WTC11 (cell line): ENCODE measurements at regions of chr2 and their contacts with region 1.

Region 1: DNA sequence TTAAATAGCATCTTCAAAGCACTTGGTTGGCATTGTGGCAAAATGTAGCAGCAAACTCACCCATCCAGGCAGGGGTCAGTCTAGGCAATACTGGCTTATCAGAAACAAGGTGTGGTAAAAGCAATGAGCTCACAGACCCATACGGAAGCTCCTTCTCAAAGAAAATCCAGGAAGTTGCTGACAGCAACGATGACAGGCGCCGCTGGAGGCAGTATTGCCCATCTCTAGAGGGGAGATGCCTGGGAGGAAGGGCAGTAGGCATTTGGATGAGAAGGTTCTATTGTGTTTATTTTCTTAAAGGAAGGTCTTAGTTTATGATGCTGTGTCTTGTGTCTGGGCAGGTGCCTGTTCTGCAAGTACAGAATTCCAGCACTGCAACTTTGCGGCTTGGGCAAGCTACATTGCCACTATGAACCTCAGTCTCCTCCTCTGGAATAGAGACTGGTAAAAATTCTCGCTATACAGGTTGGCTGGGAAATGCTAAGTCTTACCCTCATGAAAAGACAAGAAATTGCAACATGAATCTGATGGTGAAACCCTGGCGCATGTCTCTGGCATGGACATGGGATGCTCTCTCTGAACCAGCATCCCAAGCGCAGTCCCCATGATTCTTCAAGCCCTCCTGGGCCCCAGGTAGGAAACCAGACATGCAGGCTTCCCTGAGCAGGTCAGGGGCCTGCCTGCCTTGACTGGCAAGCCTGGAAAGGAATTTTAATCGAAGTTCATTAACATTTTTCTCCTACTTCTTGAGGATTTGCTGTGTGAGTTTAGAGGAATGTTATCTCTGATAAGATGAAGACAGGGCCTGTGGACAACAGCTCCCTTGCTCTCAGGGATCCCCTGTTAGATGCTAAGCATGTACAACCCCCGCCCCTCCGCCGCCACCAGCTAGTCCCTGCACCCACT is 156.0 kb downstream of the TFCP2L1 start:
- DNase-seq: peak; percentile 74
- ATAC-seq: peak; percentile 64
- H3K4me3 Mint-ChIP-seq: no peak overlapping the region
- H3K27ac Mint-ChIP-seq: no peak overlapping the region
- H3K4me1 Mint-ChIP-seq: peaks cover 23% of the 10 kb centered on the region
- H3K27me3 Mint-ChIP-seq: peaks cover 8% of the 10 kb centered on the region
- CTCF ChIP-seq: peak; percentile 35; the same call in 1 of the 2 replicates

Region 2: DNA sequence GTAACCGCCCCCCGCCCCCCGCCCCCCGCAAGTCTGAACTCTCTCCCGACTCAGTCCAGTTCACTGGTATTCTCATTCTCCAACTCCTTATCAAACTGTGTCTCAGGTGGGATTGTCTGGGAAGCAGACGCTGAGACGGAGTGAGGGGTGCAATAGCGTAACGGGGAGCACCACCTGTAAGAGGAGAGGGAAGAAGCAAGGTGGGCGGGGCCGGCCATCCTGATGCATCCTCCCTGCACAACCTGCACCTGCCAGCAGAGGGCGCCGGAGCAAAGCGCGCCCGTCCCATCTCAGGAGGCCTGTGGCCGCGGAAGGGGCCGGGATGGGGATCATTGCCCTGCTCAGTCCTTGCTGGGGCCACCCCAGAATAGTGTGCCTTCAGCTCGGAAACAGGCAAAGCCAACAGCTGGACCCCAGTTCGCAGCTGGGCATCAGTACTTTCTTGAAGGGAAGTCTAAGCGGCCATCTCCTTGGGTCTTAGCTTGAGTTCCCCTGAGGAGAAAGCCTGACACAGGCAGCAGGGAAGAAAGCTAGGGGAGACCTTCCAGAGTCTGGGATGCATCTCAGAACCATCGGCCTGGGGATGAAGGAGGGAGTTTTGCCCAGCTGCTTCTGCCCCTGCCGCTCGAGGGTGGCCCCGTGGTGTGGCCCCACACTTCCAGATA is 52.0 kb before region 1 on chr2:
- CTCF ChIA-PET with region 1: interaction called, 19 read pairs
- POLR2A ChIA-PET with region 1: no interaction called
- DNase-seq: peak; percentile 93
- ATAC-seq: peak; percentile 33
- H3K4me3 Mint-ChIP-seq: peak overlapping the region; percentile 72
- H3K27ac Mint-ChIP-seq: no peak overlapping the region
- H3K4me1 Mint-ChIP-seq: peaks cover 16% of the 10 kb centered on the region
- H3K27me3 Mint-ChIP-seq: peaks cover 48% of the 10 kb centered on the region
- CTCF ChIP-seq: peak; percentile 96

Region 3: GRCh38 chr2:121104721-121105141 is 24.3 kb before region 1 on chr2:
- CTCF ChIA-PET with region 1: interaction called, 112 read pairs
- POLR2A ChIA-PET with region 1: no interaction called
- DNase-seq: peak; percentile 22
- ATAC-seq: no peak; the same call in 1 of the 2 replicates
- H3K4me3 Mint-ChIP-seq: no peak overlapping the region
- H3K27ac Mint-ChIP-seq: no peak overlapping the region
- H3K4me1 Mint-ChIP-seq: peaks cover 6% of the 10 kb centered on the region; the same call in 1 of the 2 replicates
- H3K27me3 Mint-ChIP-seq: peaks cover 11% of the 10 kb centered on the region
- CTCF ChIP-seq: no peak

Region 4: GRCh38 chr2:121159291-121160071 is 30.5 kb after region 1 on chr2:
- CTCF ChIA-PET with region 1: interaction called, 11 read pairs
- POLR2A ChIA-PET with region 1: no interaction called
- DNase-seq: no peak
- ATAC-seq: no peak
- H3K4me3 Mint-ChIP-seq: no peak overlapping the region
- H3K27ac Mint-ChIP-seq: no peak overlapping the region
- H3K4me1 Mint-ChIP-seq: no peaks in the 10 kb centered on the region
- H3K27me3 Mint-ChIP-seq: peaks cover 21% of the 10 kb centered on the region
- CTCF ChIP-seq: no peak

Region 5: DNA sequence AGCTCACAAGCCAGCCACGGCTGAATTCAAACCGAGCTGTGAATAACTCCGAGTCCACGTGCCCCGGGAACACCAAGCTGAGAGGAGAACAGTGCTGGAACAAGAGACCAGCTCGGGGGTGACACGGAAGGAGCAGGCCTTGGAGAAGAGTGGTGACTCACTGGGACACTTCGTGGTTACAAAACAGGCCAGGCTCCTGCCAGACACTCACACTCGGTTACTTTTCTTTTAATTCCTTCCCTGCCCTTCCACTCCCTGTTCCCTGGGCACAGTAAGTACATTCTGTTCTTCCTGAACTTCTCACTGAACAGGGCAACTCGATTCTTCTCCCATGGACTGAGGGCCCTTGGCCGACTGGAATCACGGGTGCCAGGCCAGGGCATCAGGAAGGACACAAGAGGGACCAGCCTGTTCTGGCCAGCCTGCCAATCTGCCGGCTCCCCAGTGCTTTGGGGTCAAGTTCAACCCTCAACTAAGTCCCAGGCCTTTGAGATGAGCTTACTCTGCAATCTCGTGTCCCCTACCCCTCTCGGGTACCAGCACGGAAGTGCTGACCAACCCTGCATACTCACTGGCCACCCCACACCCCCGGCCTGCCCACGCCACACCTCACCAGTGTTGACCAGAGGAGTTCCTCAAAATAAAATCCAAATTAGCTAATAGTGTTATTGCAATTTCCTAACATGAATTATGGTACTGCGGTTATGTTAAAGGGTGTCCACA is 68.5 kb after region 1 on chr2:
- CTCF ChIA-PET with region 1: interaction called, 18 read pairs
- POLR2A ChIA-PET with region 1: no interaction called
- DNase-seq: no peak
- ATAC-seq: no peak
- H3K4me3 Mint-ChIP-seq: no peak overlapping the region
- H3K27ac Mint-ChIP-seq: 0 out of 2 replicates have a peak overlapping the region, but pooled peaks have one; percentile 20
- H3K4me1 Mint-ChIP-seq: peaks cover 12% of the 10 kb centered on the region
- H3K27me3 Mint-ChIP-seq: no peaks in the 10 kb centered on the region
- CTCF ChIP-seq: no peak

Region 6: DNA sequence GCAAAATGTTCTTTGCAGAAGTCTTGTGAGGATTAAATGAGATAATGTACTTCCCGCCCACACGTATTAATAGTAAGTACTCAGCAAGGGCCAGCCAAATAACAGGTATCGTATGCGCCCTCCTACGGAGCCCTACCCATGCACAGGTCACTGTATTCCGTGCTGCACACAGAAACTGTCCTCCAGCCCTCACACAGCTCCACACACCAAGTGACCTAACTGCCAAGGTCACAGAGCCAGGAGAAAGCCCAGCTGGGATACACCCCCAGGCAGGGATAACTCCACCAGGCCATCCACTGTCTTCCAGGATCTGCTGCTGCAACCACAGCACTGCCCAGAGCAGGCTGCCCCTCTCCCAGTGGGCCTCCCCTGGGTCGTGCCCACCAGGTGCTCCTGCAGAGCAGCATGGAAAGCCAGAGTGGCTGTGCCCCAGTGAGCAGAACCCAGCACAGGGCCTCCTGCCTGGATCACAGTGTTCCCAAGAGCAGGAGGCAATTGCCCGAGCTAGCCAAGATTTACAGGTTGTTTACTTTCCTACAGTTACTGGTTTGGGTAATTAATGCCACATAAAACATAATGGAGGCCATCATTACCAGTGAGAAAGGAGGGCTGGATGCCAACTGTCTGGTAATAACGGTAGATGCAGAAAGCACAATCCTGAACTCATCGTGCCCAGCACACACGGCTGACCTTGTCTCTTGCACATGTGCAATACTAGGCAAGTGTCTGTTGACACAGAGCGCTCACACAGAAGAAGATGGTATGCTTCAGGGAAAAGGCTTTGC is 131.6 kb after region 1 on chr2:
- CTCF ChIA-PET with region 1: no interaction called
- POLR2A ChIA-PET with region 1: no interaction called
- DNase-seq: no peak
- ATAC-seq: no peak
- H3K4me3 Mint-ChIP-seq: no peak overlapping the region
- H3K27ac Mint-ChIP-seq: no peak overlapping the region
- H3K4me1 Mint-ChIP-seq: peaks cover 6% of the 10 kb centered on the region
- H3K27me3 Mint-ChIP-seq: no peaks in the 10 kb centered on the region
- CTCF ChIP-seq: no peak

Region 7: DNA sequence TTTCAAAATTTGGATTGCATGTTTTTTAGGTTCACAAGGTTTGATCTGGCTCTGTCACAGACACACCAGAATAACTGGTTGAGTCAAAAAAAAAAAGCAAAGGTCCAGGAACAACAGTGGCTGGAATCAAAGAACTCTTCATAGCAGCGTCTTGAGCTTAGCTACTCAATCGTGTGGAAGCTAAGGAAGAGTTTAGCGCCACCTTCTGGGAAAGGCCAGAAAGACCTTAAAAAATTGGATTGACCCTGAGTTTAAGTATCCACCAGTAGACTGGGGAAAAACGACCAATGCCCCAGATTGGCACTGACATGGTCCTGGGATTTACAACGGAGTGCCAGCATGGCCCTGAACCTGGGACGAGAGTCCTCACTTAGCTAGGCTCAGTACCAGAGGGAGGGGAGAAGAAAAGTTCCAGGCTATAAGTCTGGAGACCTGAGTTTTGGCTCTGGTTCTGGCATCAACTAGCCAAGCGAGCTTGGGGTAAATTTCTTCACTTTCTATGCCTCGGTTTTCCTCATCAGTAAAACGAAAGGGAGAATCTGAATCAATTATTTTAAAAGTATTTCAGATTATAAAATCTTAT is 227.1 kb after region 1 on chr2:
- CTCF ChIA-PET with region 1: interaction called, 100 read pairs
- POLR2A ChIA-PET with region 1: no interaction called
- DNase-seq: peak; percentile 59
- ATAC-seq: peak; percentile 91
- H3K4me3 Mint-ChIP-seq: no peak overlapping the region
- H3K27ac Mint-ChIP-seq: no peak overlapping the region
- H3K4me1 Mint-ChIP-seq: no peaks in the 10 kb centered on the region
- H3K27me3 Mint-ChIP-seq: no peaks in the 10 kb centered on the region
- CTCF ChIP-seq: peak; percentile 55; the same call in 1 of the 2 replicates

Region 8: GRCh38 chr2:121454549-121455090 is 325.6 kb after region 1 on chr2:
- CTCF ChIA-PET with region 1: no interaction called
- POLR2A ChIA-PET with region 1: no interaction called
- DNase-seq: no peak
- ATAC-seq: no peak
- H3K4me3 Mint-ChIP-seq: no peak overlapping the region
- H3K27ac Mint-ChIP-seq: no peak overlapping the region
- H3K4me1 Mint-ChIP-seq: no peaks in the 10 kb centered on the region
- H3K27me3 Mint-ChIP-seq: no peaks in the 10 kb centered on the region
- CTCF ChIP-seq: no peak